Aorta (tissue), 5 donors: ENCODE measurements at regions of chr5 and their contacts with region 1.

Region 1: DNA sequence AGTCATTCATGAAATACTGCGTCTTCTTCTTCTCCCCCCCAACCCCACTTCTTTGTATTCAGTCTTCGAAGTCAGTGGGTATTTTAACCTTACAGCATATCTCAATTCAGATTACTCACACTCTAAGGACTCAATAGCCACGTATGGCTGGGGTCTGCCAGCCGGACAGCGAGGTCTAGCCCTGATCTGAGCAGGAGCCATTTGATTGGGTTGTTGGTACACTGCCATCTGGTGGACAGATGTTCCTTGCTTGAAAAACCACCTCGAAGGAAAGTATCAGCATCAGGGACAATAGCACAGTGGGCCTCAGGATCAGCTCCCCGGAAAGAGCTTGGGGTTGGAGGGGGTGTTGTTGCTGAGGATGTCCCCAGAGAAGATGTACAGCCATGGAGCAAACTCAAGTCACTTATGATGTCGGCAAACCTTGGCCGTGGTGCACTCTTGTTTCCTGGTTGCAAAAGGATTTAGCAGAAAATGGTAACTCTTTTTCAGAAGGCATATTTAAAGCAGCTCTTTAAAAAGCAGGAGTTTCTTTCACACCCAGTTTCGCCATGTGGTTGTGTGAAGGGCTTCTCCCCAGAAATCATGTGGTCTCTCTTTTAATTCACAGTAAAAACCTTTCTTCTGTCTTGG is 31.7 kb upstream of the KCNMB1 start:
- DNase-seq: peak in 1 of 2 donors; percentile 63
- ATAC-seq: peak; percentile 80
- H3K4me3 ChIP-seq: no peak overlapping the region
- H3K27ac ChIP-seq: no peak overlapping the region
- H3K4me1 ChIP-seq: no peaks in the 10 kb centered on the region
- H3K27me3 ChIP-seq: no peaks in the 10 kb centered on the region

Region 2: GRCh38 chr5:170100066-170100943 is 320.6 kb before region 1 on chr5:
- intact Hi-C with region 1: loop called in 1 of 2 experiments (anchors 10 kb)
- DNase-seq: peak; percentile 82 to 86
- ATAC-seq: peak; percentile 66
- H3K4me3 ChIP-seq: no peak overlapping the region
- H3K27ac ChIP-seq: no peak overlapping the region
- H3K4me1 ChIP-seq: no peaks in the 10 kb centered on the region
- H3K27me3 ChIP-seq: no peaks in the 10 kb centered on the region

Region 3: GRCh38 chr5:170225326-170226128 is 195.4 kb before region 1 on chr5:
- intact Hi-C with region 1: loop called (anchors 5 kb)
- DNase-seq: peak; percentile 81 to 82
- ATAC-seq: peak; percentile 85
- H3K4me3 ChIP-seq: no peak overlapping the region
- H3K27ac ChIP-seq: no peak overlapping the region
- H3K4me1 ChIP-seq: no peaks in the 10 kb centered on the region
- H3K27me3 ChIP-seq: no peaks in the 10 kb centered on the region

Region 4: DNA sequence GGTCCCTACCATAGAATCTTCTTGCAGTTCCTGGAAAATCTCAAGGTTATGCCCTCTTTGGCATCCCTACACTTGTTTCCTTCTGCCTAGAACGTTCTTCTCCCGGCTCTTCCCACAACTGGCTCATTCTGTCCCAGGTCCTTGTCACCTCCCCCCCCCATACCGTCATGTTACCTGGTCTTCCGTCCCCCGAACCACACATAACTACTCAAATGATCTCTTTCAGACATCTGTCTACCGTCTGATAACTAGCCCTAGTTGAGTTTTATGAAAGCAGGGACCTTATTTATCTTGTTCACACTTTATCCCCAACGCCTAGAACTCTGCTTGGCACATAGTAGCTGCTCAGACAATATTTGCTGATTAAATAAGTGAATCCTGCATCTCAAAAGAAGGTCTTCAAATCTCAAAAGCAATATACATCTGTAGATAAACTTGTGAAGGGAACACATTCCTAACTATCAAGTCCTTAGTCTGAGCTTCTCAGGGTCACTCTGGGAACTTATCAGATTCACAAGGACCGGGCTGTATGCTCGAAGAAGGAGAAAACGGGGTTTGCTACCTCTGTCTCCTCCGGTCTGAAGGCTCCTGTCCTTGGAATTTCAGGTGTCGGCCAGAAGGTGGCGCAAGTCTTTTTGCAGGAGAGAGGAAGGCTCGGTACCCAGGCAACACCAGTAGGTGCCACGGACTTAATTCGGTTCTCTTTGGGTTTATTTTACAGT is 153.3 kb before region 1 on chr5:
- intact Hi-C with region 1: loop called (anchors 1 to 2 kb)
- DNase-seq: peak; percentile 89 to 90
- ATAC-seq: peak; percentile 81
- H3K4me3 ChIP-seq: peak overlapping the region in 1 of 2 donors; percentile 32
- H3K27ac ChIP-seq: no peak overlapping the region
- H3K4me1 ChIP-seq: no peaks in the 10 kb centered on the region
- H3K27me3 ChIP-seq: no peaks in the 10 kb centered on the region

Region 5: DNA sequence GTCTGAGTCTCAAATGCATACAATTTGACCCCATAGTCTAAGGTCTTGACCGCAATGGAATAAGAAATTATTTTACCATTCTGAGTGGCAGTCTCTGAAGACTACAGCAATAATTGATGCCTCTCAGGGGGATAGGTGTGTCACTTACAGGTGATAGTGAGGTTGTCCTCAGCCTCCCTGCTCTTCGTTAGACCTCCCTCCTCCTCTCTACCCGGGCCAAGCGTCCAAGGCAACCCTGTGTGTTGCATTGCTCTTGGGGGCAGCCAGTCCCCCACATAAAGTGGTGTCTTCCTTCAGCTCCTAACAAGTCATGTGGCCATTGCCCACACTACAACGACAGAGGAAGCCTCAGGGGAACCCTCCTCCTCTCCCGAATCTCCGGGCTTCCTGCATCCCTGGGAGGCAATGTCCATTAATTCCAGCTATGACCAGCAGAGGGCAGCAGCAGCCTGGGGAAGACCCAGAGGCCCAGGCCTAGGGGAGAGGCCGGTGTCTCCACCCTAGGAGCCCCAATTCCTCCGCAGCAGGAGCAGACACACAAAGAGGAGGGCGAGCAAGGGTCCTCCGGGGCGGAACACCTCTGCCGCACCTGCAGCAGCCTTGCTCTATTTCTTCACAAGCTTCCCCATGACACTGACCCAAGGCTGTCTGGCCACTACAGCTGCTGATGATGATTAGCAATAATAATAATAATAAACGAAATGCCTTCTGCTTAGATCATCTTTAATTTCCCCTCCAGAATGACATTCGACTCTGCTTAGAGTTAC is 217.7 kb after region 1 on chr5:
- intact Hi-C with region 1: no loop called
- DNase-seq: peak; percentile 73 to 86
- ATAC-seq: peak; percentile 61
- H3K4me3 ChIP-seq: no peak overlapping the region
- H3K27ac ChIP-seq: no peak overlapping the region
- H3K4me1 ChIP-seq: no peaks in the 10 kb centered on the region
- H3K27me3 ChIP-seq: no peaks in the 10 kb centered on the region